Activated T-helper 1 cell treated with anti-CD3 and anti-CD28 coated beads, Interleukin-12 subunit alpha, Interleukin-12 subunit beta, Interleukin-2, Interleukin-4 antibody, amounts not matched to agents 30 ng/mL and 10 ng/mL and 1 ng/mL, durations not matched to agents 14 hours and 24 hours and 36 hours (primary cell): ENCODE measurements at regions of chr1 and their contacts with region 1.

Region 1: DNA sequence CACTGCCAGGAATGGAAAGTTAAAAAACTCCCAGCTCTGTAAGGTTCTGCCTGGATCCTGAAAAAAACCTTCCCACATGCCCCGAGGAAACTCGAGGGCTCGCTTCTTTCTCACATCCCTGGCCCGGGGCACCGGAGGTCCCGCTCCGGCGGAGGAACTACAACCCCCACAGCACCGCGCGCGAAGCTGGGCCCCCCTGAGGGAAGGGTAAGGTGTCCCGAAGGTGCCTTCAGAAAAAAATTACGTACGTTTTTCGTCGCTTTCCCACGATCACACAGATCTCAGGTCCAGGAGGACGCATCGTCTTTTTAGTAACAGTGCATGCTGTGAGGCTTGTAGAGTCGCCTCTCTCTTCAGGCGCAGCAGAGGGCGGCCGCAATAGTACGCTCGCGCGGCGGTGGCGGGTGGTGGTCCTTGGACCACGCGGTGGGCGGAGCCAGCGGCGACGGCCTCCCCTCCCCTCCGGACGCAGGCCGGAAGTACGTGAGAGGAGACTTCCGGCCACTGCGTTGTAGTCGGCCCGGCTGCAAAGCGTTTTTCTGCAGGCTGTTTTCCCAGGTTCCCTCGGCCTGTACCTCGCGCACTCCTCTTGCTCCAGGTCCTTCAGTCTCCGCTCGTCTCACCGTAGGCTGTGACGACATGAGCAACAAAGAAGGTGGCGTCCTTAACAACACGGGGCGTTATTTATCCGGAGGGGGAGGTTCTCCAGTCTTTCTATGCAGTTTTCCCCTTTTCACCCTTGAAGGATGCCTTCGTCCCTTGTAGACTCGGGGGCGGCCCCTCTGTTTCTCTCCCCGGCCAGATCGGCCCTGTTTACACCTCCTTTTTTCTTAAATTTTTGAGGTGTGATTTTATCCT is at the start of gene TSNAX:
- DNase-seq: peak; percentile 88
- H3K4me3 Mint-ChIP-seq: peak within 1 kb of the TSS; percentile 93
- H3K27ac Mint-ChIP-seq: peak within 1 kb of the TSS; percentile 98
- H3K4me1 Mint-ChIP-seq: peaks cover 38% of the 10 kb centered on the region
- H3K27me3 Mint-ChIP-seq: no peaks in the 10 kb centered on the region
- total RNA-seq, gene TSNAX: 42.7 and 47.1 TPM in 2 replicates

Region 2: DNA sequence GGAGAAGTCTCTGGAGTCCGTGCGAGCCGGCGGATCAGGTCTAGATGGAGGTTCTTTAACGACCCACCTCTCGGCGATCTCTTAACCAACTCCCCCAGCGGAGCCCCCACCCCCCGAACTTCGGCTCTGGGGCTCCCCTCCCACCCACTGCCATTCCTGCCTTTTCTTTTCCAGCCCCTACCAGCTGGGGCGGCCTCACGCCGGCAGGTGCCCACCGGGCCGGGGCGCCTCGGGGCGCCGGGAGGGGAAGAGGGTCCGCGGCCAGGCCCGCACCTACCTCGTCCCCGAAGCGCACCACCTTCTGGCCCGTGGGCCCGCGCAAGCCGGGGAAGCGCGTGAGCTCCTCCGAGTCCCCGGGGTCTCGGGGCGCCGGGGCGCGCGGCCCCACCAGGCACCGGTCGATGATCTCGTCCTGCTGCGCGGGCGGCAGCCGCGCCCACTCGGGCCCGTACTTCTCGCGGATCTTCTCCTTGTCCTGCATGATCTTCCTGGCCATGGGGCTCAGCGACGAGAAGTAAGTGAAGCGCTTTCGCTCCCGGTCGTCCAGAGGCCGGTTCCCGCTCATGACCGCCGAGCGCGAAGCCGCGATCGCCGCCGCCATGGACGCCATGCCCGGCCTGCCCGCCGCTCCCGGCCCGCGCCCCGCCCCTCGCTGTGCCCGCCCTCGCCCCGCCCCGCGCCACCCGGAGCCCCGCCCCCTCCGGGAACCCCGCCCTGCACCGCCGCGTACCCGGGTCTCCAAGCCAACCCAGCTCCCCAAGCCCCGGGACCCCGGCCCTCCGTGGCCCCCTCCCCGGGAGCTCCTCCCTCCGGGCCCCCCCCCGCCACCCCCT is 660.3 kb before region 1 on chr1 and contains the start of gene C1orf198:
- intact Hi-C with region 1: loop called (anchors 5 kb)
- DNase-seq: peak; percentile 59
- H3K4me3 Mint-ChIP-seq: peak within 1 kb of the TSS; percentile 87
- H3K27ac Mint-ChIP-seq: peak within 1 kb of the TSS; percentile 80
- H3K4me1 Mint-ChIP-seq: peaks cover 28% of the 10 kb centered on the region
- H3K27me3 Mint-ChIP-seq: peaks cover 39% of the 10 kb centered on the region
- total RNA-seq, gene C1orf198: 14.1 and 14.6 TPM in 2 replicates

Region 3: DNA sequence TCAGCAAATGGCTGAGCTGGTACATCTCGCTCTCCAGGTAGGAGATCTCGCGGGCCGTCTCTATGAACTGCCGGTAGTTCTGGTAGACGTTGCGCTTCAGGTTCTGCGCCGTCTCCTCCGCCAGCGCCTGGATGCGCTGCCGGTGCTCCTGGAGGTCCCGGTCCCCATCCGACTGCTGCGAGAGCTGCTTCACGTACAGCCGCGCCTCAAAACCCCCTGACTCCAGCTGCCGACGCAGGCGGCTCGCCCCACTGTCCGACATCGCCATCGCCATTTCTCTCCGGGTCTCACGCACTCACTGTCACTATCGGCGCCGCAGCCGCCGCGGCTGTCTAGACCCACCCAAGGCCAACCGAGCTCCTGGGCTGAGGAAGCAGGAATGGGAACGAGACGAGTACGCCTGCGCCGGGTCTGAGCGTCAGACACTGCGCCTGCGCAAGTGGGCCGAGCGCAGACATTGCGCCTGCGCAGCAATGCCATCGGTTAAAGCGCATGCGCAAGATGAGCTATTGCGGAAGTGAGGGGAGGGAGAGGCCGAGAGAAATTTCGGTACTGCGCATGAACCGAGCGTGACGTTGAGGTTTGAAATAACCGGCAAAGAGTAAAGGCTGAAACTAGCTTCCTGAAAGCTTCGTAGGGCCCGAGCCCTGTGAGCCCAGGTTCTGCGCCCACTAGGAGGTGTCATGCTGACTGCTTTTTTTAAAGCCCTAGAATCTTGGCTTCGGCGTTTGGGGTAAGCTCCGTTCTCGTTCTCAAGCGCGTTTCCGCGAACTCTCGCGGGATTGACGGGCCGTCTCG is 190.7 kb before region 1 on chr1 and contains the start of gene EXOC8:
- intact Hi-C with region 1: loop called (anchors 1 kb)
- DNase-seq: peak; percentile 99
- H3K4me3 Mint-ChIP-seq: peak within 1 kb of the TSS; percentile 98
- H3K27ac Mint-ChIP-seq: peak within 1 kb of the TSS; percentile 100
- H3K4me1 Mint-ChIP-seq: peaks cover 62% of the 10 kb centered on the region
- H3K27me3 Mint-ChIP-seq: peaks cover 3% of the 10 kb centered on the region
- total RNA-seq, gene EXOC8: 14.4 and 15.6 TPM in 2 replicates

Region 4: DNA sequence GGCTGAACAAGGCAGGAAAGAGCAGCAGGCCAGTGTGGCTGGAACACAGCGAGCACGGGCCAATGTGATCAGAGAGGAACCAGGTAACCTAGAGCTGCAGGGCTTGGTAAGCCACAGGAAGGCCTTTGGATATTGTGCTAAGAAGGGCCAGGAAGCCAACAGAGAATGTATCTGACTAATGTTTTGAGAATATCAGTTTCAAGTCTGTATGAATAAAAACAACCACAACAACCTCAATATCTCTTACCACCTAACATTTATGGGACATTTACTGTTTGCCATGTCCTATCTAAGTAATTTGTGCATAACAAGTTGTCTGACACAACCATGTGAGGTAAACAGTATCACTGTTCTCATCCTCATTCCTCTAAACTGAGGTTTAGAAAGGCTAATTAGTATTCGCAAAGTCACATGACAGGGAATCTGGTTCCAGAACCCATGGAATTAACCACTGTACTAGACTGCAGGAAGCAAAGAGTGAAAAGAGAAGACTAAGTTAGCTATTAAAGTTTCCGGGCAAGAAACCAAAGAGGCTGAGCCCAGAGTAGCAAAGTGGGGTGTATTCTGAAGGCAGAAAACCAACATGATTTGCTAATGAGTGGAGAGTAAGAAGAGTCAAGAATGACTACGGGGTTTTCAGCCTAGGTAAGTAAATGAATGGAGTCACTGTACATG is 151.4 kb before region 1 on chr1:
- intact Hi-C with region 1: loop called (anchors 1 kb)
- DNase-seq: peak; percentile 13
- H3K4me3 Mint-ChIP-seq: peak overlapping the region; percentile 6
- H3K27ac Mint-ChIP-seq: peak overlapping the region; percentile 78
- H3K4me1 Mint-ChIP-seq: peaks cover 43% of the 10 kb centered on the region
- H3K27me3 Mint-ChIP-seq: no peaks in the 10 kb centered on the region

Region 5: DNA sequence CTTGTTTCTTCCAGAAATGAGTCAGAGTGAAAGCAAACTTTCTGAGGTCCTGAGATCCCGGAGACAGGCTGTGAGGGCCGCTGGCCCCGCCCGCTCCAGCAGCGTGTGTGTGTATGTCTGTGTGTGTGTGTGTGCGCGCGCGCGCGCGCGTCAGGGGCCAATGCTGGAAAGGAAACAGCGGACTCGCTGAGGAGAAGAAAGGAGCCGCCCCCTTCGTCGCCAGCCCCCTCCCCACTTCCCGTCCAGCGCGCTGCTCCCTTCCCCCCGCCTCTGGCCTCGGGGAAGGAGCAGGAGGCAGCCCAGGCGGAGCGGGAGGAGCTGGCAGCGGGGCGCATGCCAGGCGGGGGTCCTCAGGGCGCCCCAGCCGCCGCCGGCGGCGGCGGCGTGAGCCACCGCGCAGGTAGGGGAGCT is 98.1 kb after region 1 on chr1 and contains the start of gene DISC1:
- intact Hi-C with region 1: loop called (anchors 1 kb)
- DNase-seq: peak; percentile 68
- H3K4me3 Mint-ChIP-seq: peak within 1 kb of the TSS; percentile 86
- H3K27ac Mint-ChIP-seq: peak within 1 kb of the TSS; percentile 71
- H3K4me1 Mint-ChIP-seq: peaks cover 32% of the 10 kb centered on the region
- H3K27me3 Mint-ChIP-seq: peaks cover 21% of the 10 kb centered on the region
- total RNA-seq, gene DISC1: 3.3 and 3.4 TPM in 2 replicates